Posterior cingulate gyrus (tissue), 11 donors: ENCODE measurements at regions of chr9 and their contacts with region 1.

Region 1: DNA sequence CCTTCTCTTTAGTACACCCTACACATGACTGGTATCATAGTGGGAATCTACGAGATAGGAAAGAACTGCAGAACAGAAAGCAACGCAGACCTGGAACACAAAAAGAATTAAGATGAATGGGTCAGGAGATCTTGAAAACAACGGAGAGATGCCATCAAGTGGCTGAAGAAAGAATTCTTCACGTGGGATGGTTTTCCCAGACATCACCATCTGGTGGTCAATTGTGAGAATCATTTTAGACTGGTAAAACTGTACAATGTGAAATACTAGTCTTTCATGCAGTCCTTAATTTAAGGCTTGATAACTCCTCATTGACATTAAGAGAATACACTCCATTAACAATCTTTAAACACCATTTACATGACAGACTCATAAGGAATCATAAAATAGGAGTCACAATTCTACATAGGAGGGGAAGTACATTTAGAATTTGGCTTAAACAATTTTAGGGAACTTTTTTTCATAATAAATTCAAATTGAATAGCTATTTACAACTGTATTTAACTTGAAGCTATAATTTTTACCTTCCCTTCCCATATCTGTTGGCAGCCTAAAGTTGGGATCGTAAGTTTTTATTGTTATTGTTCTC is 128.4 kb upstream of the TRPM3 start:
- DNase-seq: peak in 2 of 10 donors; percentile 4 to 10

Region 2: GRCh38 chr9:70639853-70640814 is 609.7 kb before region 1 on chr9:
- intact Hi-C with region 1: loop called (anchors 1 kb)
- DNase-seq: peak in 5 of 10 donors; percentile 21 to 87 (median 78)

Region 3: DNA sequence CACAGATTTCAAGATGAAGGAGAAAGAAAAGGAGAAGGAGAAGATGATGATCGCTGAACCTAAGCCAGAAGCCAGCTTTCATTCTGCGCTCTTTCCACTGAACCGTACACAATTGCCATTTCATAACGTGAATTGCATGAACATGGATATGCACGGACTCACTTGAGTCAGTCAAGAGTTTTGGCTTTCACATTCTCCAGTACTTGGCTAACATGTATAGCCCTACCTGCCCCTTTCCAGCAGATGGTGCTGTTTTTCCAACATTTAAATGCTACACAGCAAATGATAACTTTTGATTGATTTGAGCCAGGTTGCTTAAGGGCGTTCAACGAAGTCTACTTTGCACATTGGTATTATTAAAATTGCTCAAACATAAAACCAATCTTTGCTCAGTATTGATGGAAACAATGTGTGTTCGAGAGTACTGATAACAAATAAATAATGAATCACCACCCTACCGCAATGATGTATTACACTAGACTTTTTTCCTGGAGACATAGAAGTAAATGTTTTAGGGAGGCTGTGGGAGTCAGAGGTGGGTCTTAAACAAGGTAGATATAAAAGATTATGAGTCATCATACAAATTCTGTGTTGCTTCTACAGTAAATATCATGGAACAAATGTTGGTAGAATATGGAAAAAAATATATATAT is 324.8 kb before region 1 on chr9:
- intact Hi-C with region 1: loop called (anchors 1 kb)
- DNase-seq: peak in 3 of 10 donors; percentile 10 to 24 (median 14)

Region 4: DNA sequence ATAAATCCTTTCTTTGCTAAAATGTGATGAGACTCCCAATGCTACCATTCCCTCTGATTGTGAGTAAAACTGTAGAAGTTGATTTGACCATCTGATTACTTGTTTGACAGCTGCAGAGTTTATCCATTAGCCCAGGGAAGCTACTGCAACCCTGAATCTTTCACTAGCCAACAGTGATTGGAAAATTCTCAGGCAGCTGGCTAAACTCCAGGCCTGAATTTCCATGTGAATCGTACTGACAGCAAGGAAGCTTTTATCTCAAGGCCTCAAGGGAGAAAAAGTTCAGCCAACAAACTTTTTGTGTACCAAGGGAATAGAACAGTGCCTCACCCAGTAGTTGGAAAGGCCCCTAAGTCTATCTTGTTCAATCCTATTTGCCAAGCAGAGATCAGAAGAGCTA is 118.3 kb after region 1 on chr9:
- intact Hi-C with region 1: no loop called
- DNase-seq: peak in 1 of 10 donors; percentile 14